PC-3 (cell line): ENCODE measurements at regions of chr4 and their contacts with region 1.

Region 1: GRCh38 chr4:61911313-61911756 is 711.2 kb downstream of the ADGRL3 start:
- DNase-seq: no peak
- ATAC-seq: no peak
- H3K4me3 ChIP-seq: no peak overlapping the region
- H3K27ac ChIP-seq: no peak overlapping the region
- H3K4me1 ChIP-seq: peaks cover 9% of the 10 kb centered on the region
- H3K27me3 ChIP-seq: no peaks in the 10 kb centered on the region
- CTCF ChIP-seq: no peak

Region 2: DNA sequence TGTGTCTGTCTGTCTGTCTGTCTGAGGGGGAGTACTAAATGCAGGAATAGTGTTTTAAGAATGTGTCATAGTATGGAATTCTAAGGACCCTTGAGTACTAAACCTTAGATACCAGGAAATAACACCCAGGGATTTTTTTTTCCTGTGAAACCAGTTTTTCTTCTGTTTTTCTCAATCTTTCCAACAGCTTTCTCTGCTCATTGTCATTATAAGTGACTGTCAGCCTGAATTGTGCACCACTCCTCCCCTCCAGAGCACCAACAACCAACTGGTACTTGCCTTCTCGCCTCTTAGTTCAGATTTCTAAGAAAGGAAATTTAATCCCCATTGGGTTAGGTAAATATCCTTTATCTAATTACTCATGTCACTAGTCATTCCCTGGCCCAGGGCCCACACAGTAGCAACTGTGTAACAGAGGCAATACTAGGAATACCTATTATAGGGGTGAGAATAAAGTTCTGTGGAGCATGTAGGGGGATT is 390.6 kb before region 1 on chr4:
- CTCF ChIA-PET with region 1: no interaction called
- POLR2A ChIA-PET with region 1: no interaction called
- intact Hi-C with region 1: loop called (anchors 10 kb)
- DNase-seq: peak; percentile 96
- ATAC-seq: peak; percentile 98
- H3K4me3 ChIP-seq: no peak overlapping the region
- H3K27ac ChIP-seq: no peak overlapping the region
- H3K4me1 ChIP-seq: peaks cover 18% of the 10 kb centered on the region
- H3K27me3 ChIP-seq: no peaks in the 10 kb centered on the region
- CTCF ChIP-seq: no peak

Region 3: DNA sequence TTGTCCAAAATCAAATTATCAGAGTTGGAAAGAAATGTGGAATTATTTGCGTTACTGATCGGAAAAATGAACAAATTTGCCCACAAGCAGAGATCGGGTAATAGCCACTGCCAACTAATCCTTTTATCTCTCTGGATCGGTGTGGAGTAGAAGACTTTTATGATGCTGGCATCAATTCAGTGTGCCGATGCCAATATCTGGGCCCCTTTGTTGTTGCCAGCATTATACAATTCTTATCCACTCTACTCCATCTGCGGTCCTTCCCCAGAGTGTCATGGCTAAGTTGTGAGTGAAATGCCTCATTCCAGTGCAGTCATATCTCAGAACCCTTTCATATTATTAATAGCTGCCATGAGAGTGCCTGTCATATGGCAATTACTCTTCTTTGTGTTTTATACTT is 51.0 kb before region 1 on chr4:
- CTCF ChIA-PET with region 1: no interaction called
- POLR2A ChIA-PET with region 1: no interaction called
- intact Hi-C with region 1: no loop called
- DNase-seq: no peak
- ATAC-seq: no peak
- H3K4me3 ChIP-seq: no peak overlapping the region
- H3K27ac ChIP-seq: no peak overlapping the region
- H3K4me1 ChIP-seq: no peaks in the 10 kb centered on the region
- H3K27me3 ChIP-seq: no peaks in the 10 kb centered on the region
- CTCF ChIP-seq: no peak

Region 4: GRCh38 chr4:62077406-62077805 is 166.1 kb after region 1 on chr4:
- CTCF ChIA-PET with region 1: no interaction called
- POLR2A ChIA-PET with region 1: no interaction called
- intact Hi-C with region 1: no loop called
- DNase-seq: no peak
- ATAC-seq: no peak
- H3K4me3 ChIP-seq: no peak overlapping the region
- H3K27ac ChIP-seq: no peak overlapping the region
- H3K4me1 ChIP-seq: no peaks in the 10 kb centered on the region
- H3K27me3 ChIP-seq: no peaks in the 10 kb centered on the region
- CTCF ChIP-seq: no peak

Region 5: GRCh38 chr4:62408454-62408853 is 497.1 kb after region 1 on chr4:
- CTCF ChIA-PET with region 1: no interaction called
- POLR2A ChIA-PET with region 1: no interaction called
- intact Hi-C with region 1: no loop called
- DNase-seq: peak; percentile 35
- ATAC-seq: no peak
- H3K4me3 ChIP-seq: no peak overlapping the region
- H3K27ac ChIP-seq: no peak overlapping the region
- H3K4me1 ChIP-seq: no peaks in the 10 kb centered on the region
- H3K27me3 ChIP-seq: no peaks in the 10 kb centered on the region
- CTCF ChIP-seq: peak; percentile 65